Activated B cell treated with CpG ODN at 0.5 μM for 24 hours (primary cell): ENCODE measurements at regions of chr11 and their contacts with region 1.

Region 1: DNA sequence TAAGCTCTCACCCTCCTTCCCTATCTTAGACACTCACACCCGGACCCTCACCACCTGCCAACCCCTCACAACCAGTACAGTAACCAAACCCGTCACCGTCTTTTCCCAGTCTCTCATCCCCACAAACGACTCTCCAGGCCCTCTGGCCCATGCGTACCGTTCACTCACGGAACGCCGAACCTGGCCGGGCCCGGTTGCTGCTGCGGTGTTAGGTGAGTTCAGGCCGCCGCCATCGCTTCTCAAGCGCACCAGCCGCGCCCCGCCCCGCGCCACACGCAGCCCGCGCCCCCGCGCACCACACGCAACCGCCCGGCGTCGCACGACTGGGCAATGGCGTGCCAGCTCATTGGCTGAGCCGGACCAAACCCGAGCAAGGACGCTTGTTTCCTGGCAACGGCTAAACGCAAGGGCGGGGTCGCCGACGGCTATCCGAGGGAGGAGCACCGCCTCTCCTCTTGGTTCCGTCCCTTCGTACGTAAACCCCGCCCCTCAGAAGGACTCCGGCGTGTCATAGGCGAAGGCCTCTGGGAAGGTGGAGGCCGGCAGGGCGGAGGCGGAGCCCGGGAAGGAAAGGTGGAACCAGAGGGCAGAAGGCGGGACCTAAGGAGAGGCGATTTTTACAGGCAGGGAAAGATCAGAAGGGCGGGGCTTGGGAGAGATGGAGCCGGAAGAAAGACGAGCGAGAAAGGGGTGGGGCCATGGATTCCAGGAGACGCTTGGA is at the start of gene FHIP1B:
- DNase-seq: peak; percentile 95
- ATAC-seq: peak; percentile 93
- H3K4me3 Mint-ChIP-seq: peak within 1 kb of the TSS; percentile 99
- H3K27ac Mint-ChIP-seq: peak within 1 kb of the TSS; percentile 92
- H3K4me1 Mint-ChIP-seq: peaks cover 32% of the 10 kb centered on the region
- H3K27me3 Mint-ChIP-seq: peaks cover 3% of the 10 kb centered on the region
- CTCF ChIP-seq: no peak
- total RNA-seq, gene FHIP1B: 27.7 and 32.8 TPM in 2 replicates

Region 2: DNA sequence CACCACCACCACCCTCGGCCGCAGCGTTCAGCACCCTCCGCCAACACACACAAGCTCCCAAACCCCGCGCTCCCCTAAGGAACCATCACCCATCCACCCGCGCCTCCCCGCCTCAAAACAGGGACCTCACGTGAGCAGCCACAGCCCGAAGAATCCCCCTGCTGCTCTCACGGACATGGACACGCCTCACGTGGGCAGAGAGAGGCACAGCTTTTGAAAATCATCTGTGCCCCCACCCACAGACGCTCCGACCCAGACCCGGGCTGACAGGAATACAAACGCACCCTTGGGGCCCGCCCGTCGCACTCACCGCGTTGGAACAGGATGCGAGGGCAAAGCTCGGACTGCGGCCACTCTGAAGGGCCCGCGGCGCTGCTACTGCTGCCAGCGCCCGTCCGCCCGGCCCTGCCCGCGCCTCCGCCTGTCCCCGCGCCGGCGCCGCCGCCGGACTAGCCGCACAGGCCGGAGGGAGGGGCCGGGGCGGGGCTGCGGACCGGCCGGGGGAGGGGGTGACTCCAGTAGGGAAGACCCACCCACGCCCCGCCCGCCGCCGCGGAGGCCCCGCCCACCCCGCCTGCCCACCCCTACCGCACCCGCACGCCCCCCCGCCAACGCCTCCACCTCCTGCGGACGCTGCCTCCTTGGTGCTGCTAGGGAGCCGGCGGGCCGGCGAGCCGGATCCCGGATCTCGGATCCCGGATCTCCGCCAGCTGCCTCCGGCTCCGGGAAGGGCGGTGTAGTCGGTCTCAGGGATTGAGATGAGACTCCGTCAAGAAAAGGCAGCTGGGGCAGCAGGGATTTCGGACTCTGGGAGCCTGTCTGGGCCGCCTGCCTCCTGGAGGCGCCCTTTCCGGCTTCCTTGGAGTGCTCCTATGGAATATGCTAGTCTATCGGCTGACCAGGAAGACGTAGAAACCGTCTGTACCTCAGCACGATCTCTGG is 239.2 kb after region 1 on chr11 and contains the start of gene TRIM3:
- CTCF ChIA-PET with region 1: no interaction called
- POLR2A ChIA-PET with region 1: no interaction called
- intact Hi-C with region 1: loop called (anchors 2 kb)
- DNase-seq: peak; percentile 75
- ATAC-seq: peak; percentile 91
- H3K4me3 Mint-ChIP-seq: peak within 1 kb of the TSS; percentile 86
- H3K27ac Mint-ChIP-seq: peak within 1 kb of the TSS; percentile 82
- H3K4me1 Mint-ChIP-seq: peaks cover 17% of the 10 kb centered on the region
- H3K27me3 Mint-ChIP-seq: no peaks in the 10 kb centered on the region
- CTCF ChIP-seq: no peak
- total RNA-seq, gene TRIM3: 8.3 and 9.0 TPM in 2 replicates